GM10248 (cell line): ENCODE measurements at regions of chr9 and their contacts with region 1.

Region 1: DNA sequence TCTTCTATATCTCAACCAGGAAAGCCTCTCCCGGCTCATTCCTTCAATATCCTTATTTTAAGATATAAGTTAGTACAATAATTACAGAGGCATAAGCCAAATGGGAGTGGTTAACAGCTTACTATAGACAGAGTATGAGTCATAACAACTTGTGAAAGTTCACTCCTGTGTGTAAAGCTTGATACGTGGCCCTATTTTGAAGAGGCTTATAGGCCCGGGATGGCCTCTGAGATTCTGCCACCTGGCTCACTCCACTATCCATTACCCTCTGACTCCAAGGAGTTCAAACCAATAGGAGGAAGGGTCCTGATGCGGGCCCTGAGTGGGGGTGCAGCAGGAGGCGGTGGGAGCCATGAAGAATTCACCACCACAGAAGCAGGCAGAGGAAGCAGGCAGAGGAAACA is 36.6 kb downstream of the B4GALT1 start:
- DNase-seq: peak; percentile 66
- CTCF ChIP-seq: no peak

Region 2: GRCh38 chr9:32954642-32955041 is 175.9 kb before region 1 on chr9:
- CTCF ChIA-PET with region 1: no interaction called
- POLR2A ChIA-PET with region 1: no interaction called
- DNase-seq: no peak
- CTCF ChIP-seq: no peak

Region 3: GRCh38 chr9:33151007-33151557 is 20.6 kb after region 1 on chr9:
- CTCF ChIA-PET with region 1: interaction called, 10 read pairs
- POLR2A ChIA-PET with region 1: interaction called, 6 read pairs
- DNase-seq: no peak
- CTCF ChIP-seq: no peak

Region 4: GRCh38 chr9:33159760-33160127 is 29.2 kb after region 1 on chr9:
- CTCF ChIA-PET with region 1: interaction called, 17 read pairs
- POLR2A ChIA-PET with region 1: no interaction called
- DNase-seq: no peak
- CTCF ChIP-seq: no peak